Tibial artery (tissue), 4 donors: ENCODE measurements at regions of chr17 and their contacts with region 1.

Region 1: GRCh38 chr17:29293890-29294579 is at the start of gene NUFIP2:
- DNase-seq: peak; percentile 99 to 100
- H3K4me3 ChIP-seq: peak within 1 kb of the TSS; percentile 89 to 97
- H3K27ac ChIP-seq: peak within 1 kb of the TSS; percentile 93 to 96
- H3K4me1 ChIP-seq: peaks cover 0 to 38% (median 28%) of the 10 kb centered on the region in 4 donors
- H3K27me3 ChIP-seq: no peaks in the 10 kb centered on the region
- CTCF ChIP-seq: peak; percentile 8 to 11

Region 2: GRCh38 chr17:28335201-28335955 is 958.7 kb before region 1 on chr17 and contains the starts of genes IFT20 and TNFAIP1:
- intact Hi-C with region 1: loop called (anchors 10 kb)
- DNase-seq: peak; percentile 99 to 100
- H3K4me3 ChIP-seq: peak within 1 kb of the TSS; percentile 68 to 89
- H3K27ac ChIP-seq: peak within 1 kb of the TSS; percentile 92 to 94
- H3K4me1 ChIP-seq: peaks cover 0 to 48% (median 41%) of the 10 kb centered on the region in 4 donors
- H3K27me3 ChIP-seq: no peaks in the 10 kb centered on the region
- CTCF ChIP-seq: peak in 1 of 2 experiments; percentile 8

Region 3: DNA sequence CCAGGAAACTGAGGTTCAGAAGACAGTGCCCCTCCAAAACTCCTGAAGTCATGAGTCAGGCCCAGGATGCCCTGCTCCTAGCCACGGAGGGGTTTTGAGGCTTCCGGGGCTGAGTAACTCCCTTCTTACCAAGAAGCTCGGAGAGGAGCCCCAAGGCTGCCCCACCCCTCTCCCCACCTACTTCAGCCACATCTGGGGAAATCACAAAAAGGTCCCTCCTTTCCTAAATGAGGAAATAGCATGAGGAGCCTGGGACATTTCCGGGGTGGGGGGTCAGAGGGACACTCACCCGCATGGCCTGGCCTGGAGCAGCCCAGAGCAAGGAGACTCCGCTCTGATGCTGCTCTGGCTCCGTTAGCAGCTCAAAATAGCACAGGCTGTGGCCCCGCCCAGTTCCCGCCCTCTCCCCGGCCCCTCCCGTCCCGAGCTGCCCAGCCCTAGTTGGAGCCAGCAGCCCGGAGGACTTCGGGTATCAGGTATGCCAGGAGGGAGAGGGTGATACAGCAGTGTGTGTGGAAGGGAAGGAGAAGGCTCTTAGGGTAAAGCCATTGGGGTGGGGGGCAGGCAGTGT is 153.9 kb before region 1 on chr17:
- intact Hi-C with region 1: loop called (anchors 2 kb)
- DNase-seq: peak; percentile 88 to 97
- H3K4me3 ChIP-seq: peak overlapping the region; percentile 52
- H3K27ac ChIP-seq: peak overlapping the region; percentile 74 to 87
- H3K4me1 ChIP-seq: peaks cover 0 to 47% (median 35%) of the 10 kb centered on the region in 4 donors
- H3K27me3 ChIP-seq: no peaks in the 10 kb centered on the region
- CTCF ChIP-seq: no peak

Region 4: DNA sequence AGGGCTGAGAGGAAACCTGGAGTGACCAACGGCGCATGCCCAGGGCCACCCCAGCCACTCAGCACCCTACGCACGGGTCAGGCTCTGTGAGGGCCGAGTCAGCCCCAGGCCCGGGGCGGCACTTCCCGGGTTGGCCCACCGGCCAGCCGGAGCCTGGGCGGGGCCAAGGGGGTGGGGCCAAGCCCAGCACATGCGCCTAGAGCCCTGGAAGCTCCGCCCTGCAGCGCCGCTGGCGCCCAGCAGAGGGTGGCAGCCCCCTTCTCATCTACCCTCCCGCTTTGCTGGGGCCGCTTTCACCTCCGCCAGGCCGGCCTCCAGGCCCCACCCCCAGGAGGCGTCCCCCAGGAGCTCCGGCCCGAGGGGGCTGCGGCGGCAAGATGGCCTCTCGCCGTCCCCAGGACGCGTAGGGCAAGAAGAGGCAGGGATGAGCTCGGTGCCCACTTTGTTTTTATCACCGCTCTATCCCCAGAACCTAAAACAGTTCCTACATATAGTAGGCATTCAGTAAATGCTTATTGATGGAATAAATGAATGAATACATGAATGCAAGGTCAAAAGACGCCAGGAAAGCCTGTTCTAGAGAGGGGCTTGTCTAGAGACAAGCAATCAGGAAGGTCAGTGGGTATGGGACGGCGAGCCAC is 145.1 kb before region 1 on chr17:
- intact Hi-C with region 1: loop called (anchors 2 kb)
- DNase-seq: peak; percentile 93 to 97
- H3K4me3 ChIP-seq: peak overlapping the region; percentile 50 to 62
- H3K27ac ChIP-seq: peak overlapping the region; percentile 69 to 84
- H3K4me1 ChIP-seq: peaks cover 0 to 28% (median 12%) of the 10 kb centered on the region in 4 donors
- H3K27me3 ChIP-seq: no peaks in the 10 kb centered on the region
- CTCF ChIP-seq: peak; percentile 98

Region 5: DNA sequence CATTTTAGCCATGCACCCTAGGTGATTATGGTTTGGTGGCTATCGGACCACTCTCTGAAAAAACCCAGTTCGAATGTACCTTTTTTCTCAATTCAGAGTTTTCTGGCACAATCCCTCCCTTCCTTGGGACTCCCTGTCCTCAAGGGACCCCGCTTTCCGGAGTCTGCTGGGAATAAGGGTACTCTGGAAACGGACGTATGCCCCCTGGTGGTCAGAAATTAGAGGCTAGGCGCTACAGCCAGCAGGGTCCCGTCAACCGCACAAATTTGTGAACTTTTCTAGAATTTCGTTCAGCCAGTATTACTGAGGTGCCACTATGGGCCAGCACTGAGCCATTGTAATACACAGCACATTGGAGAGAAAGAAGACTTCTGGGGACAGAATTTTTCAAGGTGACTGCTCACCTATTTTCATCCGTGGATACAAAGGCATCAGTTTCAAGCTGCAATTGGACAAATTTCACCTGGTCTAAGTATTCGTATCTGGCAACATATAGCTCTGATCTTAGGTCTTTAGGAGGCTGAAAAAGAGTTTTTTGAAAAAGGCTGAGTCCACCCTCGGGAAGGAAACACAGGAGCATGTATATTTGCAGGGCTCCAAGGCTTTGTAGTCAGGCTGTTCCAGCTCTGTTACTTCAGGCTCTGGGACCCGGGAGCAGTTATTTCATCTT is 74.5 kb before region 1 on chr17:
- intact Hi-C with region 1: loop called (anchors 5 kb)
- DNase-seq: peak; percentile 71 to 86
- H3K4me3 ChIP-seq: no peak overlapping the region
- H3K27ac ChIP-seq: no peak overlapping the region
- H3K4me1 ChIP-seq: peaks cover 0 to 9% (median 3%) of the 10 kb centered on the region in 4 donors
- H3K27me3 ChIP-seq: no peaks in the 10 kb centered on the region
- CTCF ChIP-seq: peak; percentile 92 to 94

Region 6: DNA sequence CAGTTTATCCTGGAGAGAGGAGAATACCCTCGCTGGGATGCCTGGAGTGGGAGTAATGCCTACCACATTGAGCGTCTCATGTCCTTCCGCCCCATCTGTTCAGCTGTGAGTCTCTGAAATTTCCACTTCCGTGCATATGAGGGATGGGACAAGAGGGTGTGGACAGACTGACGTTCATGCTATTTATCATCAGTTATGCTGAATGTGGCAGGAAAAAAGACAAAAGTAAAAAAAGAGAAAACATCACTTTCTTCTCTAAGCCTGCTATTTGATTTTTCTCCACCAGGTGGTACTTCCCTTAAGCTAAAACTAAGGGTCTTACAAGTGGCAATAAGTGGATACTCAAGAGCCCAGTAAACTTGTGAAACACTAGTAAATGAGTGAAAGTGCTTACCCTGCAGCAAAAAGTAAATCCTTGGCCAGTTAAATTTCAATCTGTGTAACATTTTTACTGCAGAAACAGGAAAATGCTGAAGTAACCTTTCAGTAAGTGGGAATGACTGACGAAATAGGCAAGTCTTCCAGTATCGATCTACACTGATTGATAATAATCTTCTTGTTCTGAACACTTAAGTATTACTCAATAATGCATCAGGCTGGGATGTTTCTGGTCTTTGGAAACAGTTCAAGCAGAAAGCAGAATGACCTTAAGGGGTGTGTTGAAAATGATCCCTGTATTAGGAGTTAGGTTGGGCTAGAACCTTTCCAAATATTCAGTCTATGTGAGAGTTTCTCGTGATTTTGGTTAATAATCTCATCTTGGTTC is 41.8 kb before region 1 on chr17:
- intact Hi-C with region 1: loop called (anchors 5 kb)
- DNase-seq: no peak
- H3K4me3 ChIP-seq: no peak overlapping the region
- H3K27ac ChIP-seq: no peak overlapping the region
- H3K4me1 ChIP-seq: peaks cover 0 to 36% (median 19%) of the 10 kb centered on the region in 4 donors
- H3K27me3 ChIP-seq: no peaks in the 10 kb centered on the region
- CTCF ChIP-seq: peak; percentile 41 to 48

Region 7: DNA sequence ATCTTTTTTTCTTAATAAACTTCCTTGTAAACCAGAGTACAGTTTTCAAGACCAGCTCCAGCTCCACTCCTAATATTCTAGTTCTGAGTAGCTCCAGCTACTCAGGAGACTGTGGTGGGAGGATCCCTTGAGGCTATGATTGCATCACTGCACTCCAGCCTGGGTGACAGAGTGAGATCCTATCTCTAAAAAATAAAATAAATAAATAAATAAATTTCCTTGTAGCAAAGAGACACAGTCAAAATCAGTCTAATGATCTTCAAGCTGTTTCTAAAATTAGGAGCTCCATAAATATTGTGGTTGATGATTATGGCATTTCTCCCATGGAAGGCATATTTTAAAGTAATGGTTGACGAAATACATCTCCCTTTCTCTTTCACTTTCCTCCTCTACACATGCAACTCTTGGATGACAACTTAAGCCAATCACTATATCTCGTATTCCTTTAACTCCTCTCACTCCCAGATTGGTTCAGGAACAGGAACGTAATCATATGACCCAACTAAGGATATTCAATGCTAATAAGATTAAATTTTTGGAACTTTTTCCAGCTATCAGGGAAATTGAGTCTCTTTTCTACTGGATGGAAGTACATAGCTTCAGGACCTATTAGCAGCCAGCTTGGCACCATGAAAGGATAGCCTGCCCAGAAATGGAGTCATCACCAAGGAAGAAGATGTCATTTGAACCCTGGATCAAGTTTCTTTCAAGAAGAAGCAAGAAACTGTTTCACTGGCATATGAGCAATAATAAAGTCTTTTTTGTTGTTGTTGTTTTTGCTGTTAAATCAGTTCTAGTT is 54.0 kb after region 1 on chr17:
- intact Hi-C with region 1: no loop called
- DNase-seq: no peak
- H3K4me3 ChIP-seq: no peak overlapping the region
- H3K27ac ChIP-seq: no peak overlapping the region
- H3K4me1 ChIP-seq: no peaks in the 10 kb centered on the region
- H3K27me3 ChIP-seq: peaks cover 0 to 5% of the 10 kb centered on the region in 2 donors
- CTCF ChIP-seq: no peak